Activated B cell treated with CpG ODN at 0.5 μM for 24 hours (primary cell): ENCODE measurements at regions of chr13 and their contacts with region 1.

Region 1: GRCh38 chr13:100138859-100139491 is 50.1 kb downstream of the PCCA start:
- DNase-seq: no peak
- ATAC-seq: no peak
- H3K4me3 Mint-ChIP-seq: no peak overlapping the region
- H3K27ac Mint-ChIP-seq: no peak overlapping the region
- H3K4me1 Mint-ChIP-seq: no peaks in the 10 kb centered on the region
- H3K27me3 Mint-ChIP-seq: no peaks in the 10 kb centered on the region
- CTCF ChIP-seq: no peak

Region 2: GRCh38 chr13:98910501-98910951 is 1228.4 kb before region 1 on chr13:
- CTCF ChIA-PET with region 1: no interaction called
- POLR2A ChIA-PET with region 1: no interaction called
- intact Hi-C with region 1: no loop called
- DNase-seq: no peak
- ATAC-seq: no peak
- H3K4me3 Mint-ChIP-seq: no peak overlapping the region
- H3K27ac Mint-ChIP-seq: no peak overlapping the region
- H3K4me1 Mint-ChIP-seq: peaks cover 5% of the 10 kb centered on the region
- H3K27me3 Mint-ChIP-seq: no peaks in the 10 kb centered on the region
- CTCF ChIP-seq: no peak

Region 3: DNA sequence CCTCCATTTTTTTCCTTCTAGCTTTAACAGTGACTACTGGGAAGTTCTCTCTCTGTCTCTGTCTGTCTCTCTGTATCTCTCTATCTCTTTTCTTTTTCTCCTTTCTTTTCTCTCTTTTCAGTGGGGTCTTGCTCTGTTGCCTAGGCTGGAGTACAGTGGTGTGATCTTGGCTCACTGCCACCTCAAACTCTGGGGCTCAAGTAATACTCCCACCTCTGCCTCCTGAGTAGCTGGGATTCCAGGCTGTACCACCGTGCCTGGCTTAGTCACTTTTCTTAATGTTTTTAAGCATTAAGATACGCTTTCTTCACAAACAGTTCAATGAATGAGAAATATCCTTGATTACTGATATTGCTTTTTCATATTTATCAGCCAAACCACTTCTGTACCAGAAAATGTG is 36.9 kb before region 1 on chr13:
- CTCF ChIA-PET with region 1: no interaction called
- POLR2A ChIA-PET with region 1: no interaction called
- intact Hi-C with region 1: loop called (anchors 1 kb)
- DNase-seq: no peak
- ATAC-seq: no peak
- H3K4me3 Mint-ChIP-seq: no peak overlapping the region
- H3K27ac Mint-ChIP-seq: no peak overlapping the region
- H3K4me1 Mint-ChIP-seq: peaks cover 15% of the 10 kb centered on the region
- H3K27me3 Mint-ChIP-seq: no peaks in the 10 kb centered on the region
- CTCF ChIP-seq: no peak